Cardiac septum (tissue), 1 donor: ENCODE measurements at regions of chr11 and their contacts with region 1.

Region 1: GRCh38 chr11:2355000-2355644 is 22.0 kb upstream of the CD81 start:
- DNase-seq: peak; percentile 50

Region 2: DNA sequence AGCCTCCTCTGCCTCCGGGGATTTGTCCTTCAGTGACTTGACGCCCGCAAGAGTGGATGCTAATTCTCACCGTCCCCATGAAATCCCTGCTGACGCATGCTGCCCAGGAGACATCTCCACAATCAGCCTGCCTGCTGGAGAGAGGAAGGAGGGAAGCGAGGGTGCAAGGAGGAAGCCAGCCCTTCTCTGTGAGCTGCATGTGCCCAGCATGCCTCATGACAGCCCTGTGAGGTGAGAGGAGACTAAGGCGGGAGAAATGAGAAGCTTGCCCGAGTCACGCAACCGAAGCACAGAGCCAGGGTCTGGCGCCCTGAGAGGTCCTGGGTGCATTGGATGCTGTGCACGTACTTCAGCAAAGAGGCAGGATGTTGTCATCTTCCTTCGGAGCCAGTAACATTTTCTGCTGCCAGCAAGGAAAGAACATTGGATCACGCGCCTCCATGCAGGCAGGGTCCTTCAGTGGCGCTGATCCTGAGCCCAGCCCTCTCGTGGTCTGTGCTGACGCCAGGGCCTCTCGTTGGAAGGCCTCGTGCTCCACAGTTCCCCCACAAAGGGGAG is 685.4 kb before region 1 on chr11:
- intact Hi-C with region 1: loop called (anchors 10 kb)
- DNase-seq: no peak

Region 3: GRCh38 chr11:2342981-2343380 is 12.1 kb before region 1 on chr11:
- intact Hi-C with region 1: no loop called
- DNase-seq: peak; percentile 27